ENCODE measurements at regions of chr13 and their contacts with region 1.

Region 1: DNA sequence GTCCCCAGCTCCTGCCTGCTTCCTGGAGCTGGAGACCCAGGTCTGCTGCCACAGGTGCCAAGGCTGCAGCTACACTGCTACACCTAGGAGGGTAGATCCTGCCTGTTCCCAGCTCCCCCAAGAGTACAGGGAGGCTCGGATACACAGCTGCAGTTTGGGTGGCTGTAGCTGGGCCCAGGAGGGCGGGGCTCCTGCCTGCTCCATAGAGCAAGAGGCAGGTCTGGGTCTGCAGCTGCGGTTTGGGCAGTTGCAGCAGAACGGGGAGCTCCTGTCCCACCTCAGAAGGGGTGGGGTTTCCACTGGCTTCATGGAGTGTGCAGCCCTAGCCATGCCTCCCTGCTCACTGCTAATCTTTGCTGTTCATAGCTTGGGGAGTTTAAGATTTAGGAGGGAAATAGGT is 199.0 kb downstream of the NUFIP1 start:
- DNase-seq: no peak
- H3K4me3 ChIP-seq: no peak overlapping the region
- H3K27ac ChIP-seq: no peak overlapping the region
- H3K4me1 ChIP-seq: no peaks in the 10 kb centered on the region
- H3K27me3 ChIP-seq: no peaks in the 10 kb centered on the region
- CTCF ChIP-seq: no peak

Region 2: DNA sequence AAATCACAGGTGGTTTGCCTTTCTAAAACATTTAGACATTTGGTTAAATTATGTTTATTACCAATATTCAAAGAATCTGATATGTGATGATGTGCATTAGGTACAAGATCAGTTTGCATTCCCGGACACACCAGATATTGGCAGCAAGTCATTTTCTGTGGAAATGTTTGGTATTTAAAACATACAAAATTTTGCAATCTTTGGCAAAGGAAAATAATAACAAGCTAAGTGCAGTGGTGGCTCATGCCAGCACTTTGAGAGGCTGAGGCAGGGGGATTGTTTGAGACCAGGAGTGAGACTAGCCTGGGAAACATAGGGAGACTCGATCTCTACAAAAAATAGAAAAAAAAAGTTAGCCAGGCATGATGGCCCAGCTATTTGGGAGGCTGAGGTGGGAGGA is 185.0 kb before region 1 on chr13:
- CTCF ChIA-PET with region 1: no interaction called
- POLR2A ChIA-PET with region 1: interaction called, 29 read pairs
- intact Hi-C with region 1: no loop called
- DNase-seq: no peak
- H3K4me3 ChIP-seq: no peak overlapping the region
- H3K27ac ChIP-seq: no peak overlapping the region
- H3K4me1 ChIP-seq: no peaks in the 10 kb centered on the region
- H3K27me3 ChIP-seq: no peaks in the 10 kb centered on the region
- CTCF ChIP-seq: no peak